Activated naive CD4-positive, alpha-beta T cell treated with anti-CD3 and anti-CD28 coated beads for 36 hours (primary cell): ENCODE measurements at regions of chr15 and their contacts with region 1.

Region 1: GRCh38 chr15:78437762-78438302 is at the start of gene IREB2:
- DNase-seq: peak; percentile 98
- H3K4me3 Mint-ChIP-seq: peak within 1 kb of the TSS; percentile 98
- H3K27ac Mint-ChIP-seq: peak within 1 kb of the TSS; percentile 98
- H3K4me1 Mint-ChIP-seq: peaks cover 41% of the 10 kb centered on the region
- H3K27me3 Mint-ChIP-seq: no peaks in the 10 kb centered on the region
- total RNA-seq, gene IREB2: 47.6 to 51.7 TPM

Region 2: GRCh38 chr15:78299101-78299930 is 138.5 kb before region 1 on chr15 and contains the start of gene SKIC8:
- CTCF ChIA-PET with region 1: interaction called, 3 read pairs
- intact Hi-C with region 1: loop called (anchors 1 kb)
- DNase-seq: peak; percentile 92
- H3K4me3 Mint-ChIP-seq: peak within 1 kb of the TSS; percentile 97
- H3K27ac Mint-ChIP-seq: peak within 1 kb of the TSS; percentile 77
- H3K4me1 Mint-ChIP-seq: peaks cover 31% of the 10 kb centered on the region
- H3K27me3 Mint-ChIP-seq: no peaks in the 10 kb centered on the region
- total RNA-seq, gene SKIC8: 44.2 to 46.9 TPM

Region 3: GRCh38 chr15:78506971-78507830 is 69.4 kb after region 1 on chr15 and contains the start of gene HYKK:
- CTCF ChIA-PET with region 1: no interaction called
- intact Hi-C with region 1: loop called (anchors 5 kb)
- DNase-seq: peak; percentile 87
- H3K4me3 Mint-ChIP-seq: peak within 1 kb of the TSS; percentile 75
- H3K27ac Mint-ChIP-seq: no peak within 1 kb of the TSS
- H3K4me1 Mint-ChIP-seq: peaks cover 20% of the 10 kb centered on the region
- H3K27me3 Mint-ChIP-seq: no peaks in the 10 kb centered on the region
- total RNA-seq, gene HYKK: 3.4 to 3.6 TPM

Region 4: DNA sequence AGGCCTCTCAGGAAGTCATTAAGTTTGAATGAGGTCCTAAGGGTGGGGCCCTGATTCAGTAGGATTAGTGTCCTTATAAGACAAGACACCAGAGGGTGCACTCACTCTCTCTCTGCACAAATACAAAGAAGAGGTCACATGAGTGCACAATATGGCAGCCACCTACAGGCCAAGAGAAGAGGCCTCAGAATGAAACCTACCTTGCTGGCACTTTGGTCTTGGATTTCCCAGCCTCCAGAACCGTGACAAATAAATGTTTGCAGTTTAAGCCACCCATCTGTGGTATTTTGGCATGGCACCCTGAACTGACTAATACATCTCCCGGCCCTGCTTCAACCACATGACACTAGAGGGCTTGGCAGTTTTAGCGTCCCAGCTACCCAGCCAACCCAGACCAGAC is 277.1 kb after region 1 on chr15:
- CTCF ChIA-PET with region 1: no interaction called
- intact Hi-C with region 1: loop called (anchors 10 kb)
- DNase-seq: peak; percentile 38
- H3K4me3 Mint-ChIP-seq: no peak overlapping the region
- H3K27ac Mint-ChIP-seq: peak overlapping the region; percentile 22
- H3K4me1 Mint-ChIP-seq: peaks cover 6% of the 10 kb centered on the region
- H3K27me3 Mint-ChIP-seq: peaks cover 16% of the 10 kb centered on the region

Region 5: GRCh38 chr15:78872972-78873792 is 435.4 kb after region 1 on chr15:
- CTCF ChIA-PET with region 1: no interaction called
- intact Hi-C with region 1: loop called (anchors 5 kb)
- DNase-seq: peak; percentile 92
- H3K4me3 Mint-ChIP-seq: peak overlapping the region; percentile 100
- H3K27ac Mint-ChIP-seq: peak overlapping the region; percentile 100
- H3K4me1 Mint-ChIP-seq: peaks cover 34% of the 10 kb centered on the region
- H3K27me3 Mint-ChIP-seq: no peaks in the 10 kb centered on the region